Naive thymus-derived CD4-positive, alpha-beta T cell (primary cell): ENCODE measurements at regions of chr4 and their contacts with region 1.

Region 1: GRCh38 chr4:169612871-169613859 is 782 bp upstream of the NEK1 start:
- DNase-seq: peak; percentile 37 to 78 (median 73)
- ATAC-seq: peak; percentile 62
- H3K4me3 ChIP-seq: peak overlapping the region; percentile 98
- H3K4me3 Mint-ChIP-seq: peak overlapping the region; percentile 90 to 99 (median 98)
- H3K27ac ChIP-seq: peak overlapping the region; percentile 99
- H3K27ac Mint-ChIP-seq: peak overlapping the region; percentile 97 to 100 (median 100)
- H3K4me1 ChIP-seq: peaks cover 8 to 25% of the 10 kb centered on the region in 2 donors
- H3K4me1 Mint-ChIP-seq: peaks cover 12 to 73% (median 50%) of the 10 kb centered on the region in 7 donors
- H3K27me3 ChIP-seq: no peaks in the 10 kb centered on the region
- H3K27me3 Mint-ChIP-seq: no peaks in the 10 kb centered on the region

Region 2: DNA sequence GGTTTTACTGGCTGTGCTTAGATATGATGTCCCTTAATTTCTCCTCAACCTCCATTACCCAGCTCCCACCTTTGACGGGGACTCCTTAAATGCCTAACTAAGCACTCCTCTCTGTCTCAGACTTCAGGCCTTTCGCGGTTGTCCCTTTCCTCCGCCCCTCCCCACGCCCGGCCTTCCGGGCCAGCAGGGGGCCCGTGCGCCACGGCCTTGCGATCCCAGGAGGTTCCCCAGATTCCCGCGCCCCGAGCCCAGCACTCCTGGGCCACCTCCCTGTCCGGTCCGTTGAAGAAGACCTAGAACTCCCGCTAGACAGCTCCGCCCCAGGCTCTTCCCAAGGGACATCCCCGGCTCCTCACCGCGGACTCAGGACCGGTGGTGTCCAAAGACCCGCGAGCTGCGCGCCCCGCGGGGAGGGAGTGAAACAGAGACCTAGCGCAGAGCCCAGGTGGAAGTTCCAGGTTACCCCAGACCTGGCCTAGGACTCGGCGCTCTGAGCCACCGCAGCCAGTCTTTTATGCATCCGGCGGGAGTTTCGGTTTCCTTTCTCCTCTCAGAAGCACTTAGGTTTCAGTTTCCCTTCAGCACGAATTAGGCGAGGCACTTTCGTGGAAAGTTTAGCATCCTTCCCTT is 1294.8 kb before region 1 on chr4 and contains the start of gene DDX60:
- CTCF ChIA-PET with region 1: no interaction called
- POLR2A ChIA-PET with region 1: no interaction called
- intact Hi-C with region 1: loop called (anchors 1 to 5 kb)
- DNase-seq: peak; percentile 54 to 89 (median 85)
- ATAC-seq: peak; percentile 95
- H3K4me3 ChIP-seq: peak within 1 kb of the TSS; percentile 88
- H3K4me3 Mint-ChIP-seq: peak within 1 kb of the TSS; percentile 84 to 99 (median 96)
- H3K27ac ChIP-seq: peak within 1 kb of the TSS; percentile 95
- H3K27ac Mint-ChIP-seq: peak within 1 kb of the TSS; percentile 96 to 99 (median 99)
- H3K4me1 ChIP-seq: peaks cover 12 to 18% of the 10 kb centered on the region in 2 donors
- H3K4me1 Mint-ChIP-seq: peaks cover 28 to 69% (median 59%) of the 10 kb centered on the region in 7 donors
- H3K27me3 ChIP-seq: no peaks in the 10 kb centered on the region
- H3K27me3 Mint-ChIP-seq: no peaks in the 10 kb centered on the region
- total RNA-seq, gene DDX60: 15.8 to 121 (median 29.0) TPM

Region 3: DNA sequence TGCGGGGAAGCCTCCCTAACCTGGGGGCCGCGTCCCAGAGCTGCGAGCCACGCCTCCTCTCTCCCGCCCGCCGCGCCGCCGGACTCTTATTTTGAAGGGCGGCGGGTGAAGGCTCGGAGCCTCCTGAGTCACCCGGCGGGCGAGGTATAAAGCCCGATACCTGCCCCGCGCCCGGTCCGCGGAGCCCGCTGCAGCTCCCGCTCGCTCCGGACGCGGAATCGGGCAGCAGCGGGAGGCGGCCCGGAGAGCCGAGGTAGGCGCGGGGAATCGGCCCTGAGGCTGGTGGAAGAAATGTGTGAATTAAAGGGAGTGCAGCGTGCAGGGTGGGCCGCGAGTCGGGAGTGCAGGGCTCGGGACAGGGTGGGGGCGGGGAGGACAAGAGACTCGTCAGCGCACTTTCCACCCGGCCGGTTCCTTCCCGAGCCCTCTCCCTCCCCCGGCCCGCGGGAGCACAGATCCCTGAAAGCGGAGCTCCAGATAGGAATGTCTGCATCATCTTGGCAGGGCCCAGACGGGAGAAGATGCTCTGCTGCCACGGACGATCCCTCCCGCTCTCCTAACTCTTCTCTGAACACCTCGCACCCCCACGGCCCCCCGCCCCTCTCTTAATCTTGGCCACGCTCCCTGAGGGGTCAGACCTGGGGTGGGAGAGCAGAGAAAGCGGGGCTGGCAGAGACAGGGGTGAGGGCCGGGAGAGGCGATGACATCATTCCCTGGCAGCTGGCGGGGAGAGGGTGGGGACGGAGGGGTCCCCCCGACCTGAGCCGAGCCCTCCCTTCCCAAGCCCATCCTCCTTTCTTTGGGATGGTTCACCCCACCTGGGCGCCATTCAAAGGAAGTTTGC is 781.0 kb before region 1 on chr4:
- CTCF ChIA-PET with region 1: no interaction called
- POLR2A ChIA-PET with region 1: no interaction called
- intact Hi-C with region 1: loop called in 1 of 2 experiments (anchors 5 kb)
- DNase-seq: peak in 8 of 9 donors; percentile 31 to 77 (median 44)
- ATAC-seq: peak; percentile 85
- H3K4me3 ChIP-seq: peak overlapping the region; percentile 45
- H3K4me3 Mint-ChIP-seq: peak overlapping the region; percentile 63 to 91 (median 84)
- H3K27ac ChIP-seq: no peak overlapping the region
- H3K27ac Mint-ChIP-seq: peak overlapping the region in 1 of 9 donors; percentile 66
- H3K4me1 ChIP-seq: peaks cover 0 to 5% of the 10 kb centered on the region in 2 donors
- H3K4me1 Mint-ChIP-seq: peaks cover 0 to 21% (median 13%) of the 10 kb centered on the region in 7 donors
- H3K27me3 ChIP-seq: peaks cover 0 to 15% of the 10 kb centered on the region in 2 donors
- H3K27me3 Mint-ChIP-seq: peaks cover 46 to 68% (median 60%) of the 10 kb centered on the region in 5 donors

Region 4: DNA sequence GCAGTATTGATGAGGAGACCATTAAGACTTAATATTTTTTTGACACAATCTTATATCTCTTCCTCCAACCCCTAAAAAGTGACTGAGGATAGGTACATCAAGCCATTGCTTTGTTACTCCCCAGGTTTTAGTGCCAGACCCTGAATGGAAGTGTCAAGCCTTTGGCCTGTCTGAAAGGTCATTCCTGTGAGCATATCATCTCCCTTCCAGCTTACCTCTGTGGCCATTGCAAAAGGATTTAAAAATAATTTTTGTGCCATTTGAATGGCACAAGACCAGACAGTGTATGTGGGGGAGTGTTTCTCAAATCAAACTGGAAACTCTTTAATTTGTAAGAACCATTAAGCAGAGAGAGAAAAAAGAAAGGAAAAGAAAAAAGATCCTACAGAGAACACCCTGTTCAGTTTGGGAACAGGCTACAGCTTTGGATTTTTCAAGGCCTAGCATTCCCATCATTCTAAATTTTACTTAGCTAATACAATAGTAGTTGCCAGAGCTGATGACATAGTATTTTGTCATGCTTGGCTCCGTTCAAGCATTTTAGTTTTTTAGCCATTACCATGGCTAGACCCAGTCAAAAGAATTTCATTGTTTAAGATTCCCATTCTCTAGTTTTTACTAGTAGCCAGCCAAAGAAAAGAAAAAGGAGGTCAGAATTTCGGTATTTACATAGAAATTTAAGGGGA is 94.9 kb after region 1 on chr4:
- CTCF ChIA-PET with region 1: no interaction called
- POLR2A ChIA-PET with region 1: no interaction called
- intact Hi-C with region 1: loop called in 1 of 2 experiments (anchors 5 kb)
- DNase-seq: no peak
- ATAC-seq: no peak
- H3K4me3 ChIP-seq: no peak overlapping the region
- H3K4me3 Mint-ChIP-seq: no peak overlapping the region
- H3K27ac ChIP-seq: no peak overlapping the region
- H3K27ac Mint-ChIP-seq: peak overlapping the region in 3 of 9 donors; percentile 61 to 65 (median 64)
- H3K4me1 ChIP-seq: no peaks in the 10 kb centered on the region
- H3K4me1 Mint-ChIP-seq: peaks cover 0 to 6% (median 0%) of the 10 kb centered on the region in 7 donors
- H3K27me3 ChIP-seq: no peaks in the 10 kb centered on the region
- H3K27me3 Mint-ChIP-seq: no peaks in the 10 kb centered on the region

Region 5: DNA sequence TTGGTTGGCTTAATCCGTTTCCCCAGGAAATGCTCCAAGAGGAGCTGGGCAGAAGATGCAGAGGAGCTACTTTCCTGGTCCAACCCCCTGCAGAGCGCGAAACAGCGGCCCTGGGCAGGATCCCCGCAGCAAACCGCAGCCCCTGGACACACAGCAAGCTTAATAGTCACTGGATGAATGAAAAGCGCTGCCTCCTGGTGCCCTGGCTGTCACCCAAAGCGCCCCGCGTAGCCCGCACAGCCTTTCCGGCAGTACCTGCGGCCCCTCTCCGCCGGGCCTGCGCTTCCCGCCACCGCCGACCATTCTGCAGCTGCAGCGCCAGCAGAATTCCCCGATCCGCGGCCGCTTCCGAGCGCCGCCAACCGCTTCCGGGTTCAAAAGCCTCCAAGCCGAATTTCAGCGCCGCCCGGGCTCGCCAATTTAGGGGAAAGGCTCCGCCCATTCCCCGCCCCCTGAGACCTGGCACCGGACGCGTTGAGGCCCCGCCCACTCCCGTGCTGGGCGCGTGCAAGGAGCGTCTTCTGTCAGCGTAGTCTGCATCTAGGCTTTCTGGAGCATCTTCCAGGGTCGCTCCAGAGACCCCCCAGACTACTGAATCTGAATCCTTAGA is 144.5 kb after region 1 on chr4 and contains the start of gene HPF1:
- CTCF ChIA-PET with region 1: no interaction called
- POLR2A ChIA-PET with region 1: interaction called, 4 read pairs
- intact Hi-C with region 1: loop called (anchors 1 kb)
- DNase-seq: peak; percentile 84 to 93 (median 89)
- ATAC-seq: peak; percentile 98
- H3K4me3 ChIP-seq: peak within 1 kb of the TSS; percentile 83
- H3K4me3 Mint-ChIP-seq: peak within 1 kb of the TSS; percentile 82 to 92 (median 88)
- H3K27ac ChIP-seq: peak within 1 kb of the TSS; percentile 66
- H3K27ac Mint-ChIP-seq: peak within 1 kb of the TSS; percentile 52 to 81 (median 71)
- H3K4me1 ChIP-seq: peaks cover 0 to 7% of the 10 kb centered on the region in 2 donors
- H3K4me1 Mint-ChIP-seq: peaks cover 19 to 38% (median 30%) of the 10 kb centered on the region in 7 donors
- H3K27me3 ChIP-seq: no peaks in the 10 kb centered on the region
- H3K27me3 Mint-ChIP-seq: peaks cover 0 to 22% (median 0%) of the 10 kb centered on the region in 5 donors
- total RNA-seq, gene HPF1: 9.9 to 23.5 (median 13.8) TPM

Region 6: DNA sequence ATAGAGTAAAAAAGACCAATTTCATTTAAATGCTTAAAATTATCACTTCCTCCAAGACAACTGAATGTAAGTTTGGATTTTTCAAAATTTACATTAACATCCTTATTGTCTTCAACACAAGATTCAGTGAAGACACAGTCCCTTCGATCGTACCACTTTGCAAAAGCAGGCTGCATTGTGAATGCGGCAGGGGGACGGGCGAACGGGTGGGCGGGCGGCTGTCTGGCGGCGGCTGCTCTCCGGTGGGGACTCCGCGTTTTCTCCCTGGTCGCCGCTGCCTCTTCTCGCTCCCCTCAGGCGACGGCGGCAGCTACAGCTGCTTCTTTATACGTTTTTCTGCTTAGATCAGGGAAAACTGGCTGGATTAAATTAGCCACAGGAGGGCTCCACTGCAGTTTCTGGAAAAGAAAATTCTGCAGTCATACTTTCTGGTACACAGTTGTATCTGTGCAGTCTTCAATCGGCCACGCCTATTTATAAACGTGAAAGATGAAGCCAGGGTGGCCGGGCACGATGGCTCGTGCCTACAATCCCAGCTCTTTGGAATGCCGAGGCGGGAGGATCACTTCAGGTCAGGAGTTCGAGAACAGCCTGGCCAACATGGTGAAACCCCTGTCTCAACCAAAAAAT is 178.5 kb after region 1 on chr4:
- CTCF ChIA-PET with region 1: no interaction called
- POLR2A ChIA-PET with region 1: no interaction called
- intact Hi-C with region 1: loop called in 1 of 2 experiments (anchors 1 kb)
- DNase-seq: no peak
- ATAC-seq: peak; percentile 38
- H3K4me3 ChIP-seq: no peak overlapping the region
- H3K4me3 Mint-ChIP-seq: peak overlapping the region in 8 of 10 donors; percentile 29 to 73 (median 55)
- H3K27ac ChIP-seq: no peak overlapping the region
- H3K27ac Mint-ChIP-seq: no peak overlapping the region
- H3K4me1 ChIP-seq: no peaks in the 10 kb centered on the region
- H3K4me1 Mint-ChIP-seq: peaks cover 5 to 11% (median 9%) of the 10 kb centered on the region in 7 donors
- H3K27me3 ChIP-seq: peaks cover 0 to 16% of the 10 kb centered on the region in 2 donors
- H3K27me3 Mint-ChIP-seq: peaks cover 40 to 77% (median 65%) of the 10 kb centered on the region in 5 donors

Region 7: DNA sequence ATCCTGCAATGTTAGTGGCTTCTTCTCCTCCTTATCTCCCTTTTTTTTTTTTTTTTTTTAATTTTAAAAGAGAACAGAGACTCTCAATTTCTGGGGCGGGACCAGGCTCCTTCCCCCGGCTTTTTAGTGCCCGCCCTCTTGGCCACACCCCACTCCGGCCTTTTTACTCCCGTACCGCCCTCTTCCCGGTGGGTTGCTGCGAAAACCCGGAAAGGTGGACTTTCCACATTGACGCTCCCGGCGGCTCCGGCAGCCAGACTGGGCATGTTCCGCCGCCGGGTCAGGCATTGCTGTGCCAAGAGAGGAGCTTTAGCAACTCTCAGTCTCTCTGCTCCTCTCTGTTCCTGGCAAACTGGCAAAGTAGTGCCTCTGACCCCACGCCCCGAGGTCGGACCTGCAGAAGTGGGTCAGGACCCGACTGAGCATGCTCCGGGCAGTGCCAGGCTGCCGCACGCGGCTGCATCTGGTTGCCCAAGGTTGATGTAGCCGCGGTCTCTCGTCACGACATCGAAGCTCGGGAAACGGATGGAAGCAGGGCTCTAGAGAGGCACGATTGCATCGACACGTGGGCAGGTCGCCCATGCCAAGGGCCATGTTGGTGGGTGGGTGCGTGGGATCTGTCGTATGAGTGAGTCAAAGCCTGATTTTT is 414.1 kb after region 1 on chr4:
- CTCF ChIA-PET with region 1: interaction called, 3 read pairs
- POLR2A ChIA-PET with region 1: interaction called, 7 read pairs
- intact Hi-C with region 1: loop called (anchors 1 kb)
- DNase-seq: peak; percentile 76 to 92 (median 89)
- ATAC-seq: peak; percentile 83
- H3K4me3 ChIP-seq: peak overlapping the region; percentile 71
- H3K4me3 Mint-ChIP-seq: peak overlapping the region; percentile 86 to 96 (median 94)
- H3K27ac ChIP-seq: peak overlapping the region; percentile 59
- H3K27ac Mint-ChIP-seq: peak overlapping the region; percentile 65 to 89 (median 81)
- H3K4me1 ChIP-seq: peaks cover 0 to 7% of the 10 kb centered on the region in 2 donors
- H3K4me1 Mint-ChIP-seq: peaks cover 6 to 14% (median 11%) of the 10 kb centered on the region in 7 donors
- H3K27me3 ChIP-seq: no peaks in the 10 kb centered on the region
- H3K27me3 Mint-ChIP-seq: peaks cover 0 to 60% (median 8%) of the 10 kb centered on the region in 5 donors

Region 8: GRCh38 chr4:170202721-170203120 is 589.6 kb after region 1 on chr4:
- CTCF ChIA-PET with region 1: no interaction called
- POLR2A ChIA-PET with region 1: no interaction called
- intact Hi-C with region 1: no loop called
- DNase-seq: no peak
- ATAC-seq: no peak
- H3K4me3 ChIP-seq: no peak overlapping the region
- H3K4me3 Mint-ChIP-seq: no peak overlapping the region
- H3K27ac ChIP-seq: no peak overlapping the region
- H3K27ac Mint-ChIP-seq: no peak overlapping the region
- H3K4me1 ChIP-seq: no peaks in the 10 kb centered on the region
- H3K4me1 Mint-ChIP-seq: no peaks in the 10 kb centered on the region
- H3K27me3 ChIP-seq: no peaks in the 10 kb centered on the region
- H3K27me3 Mint-ChIP-seq: peaks cover 0 to 8% (median 0%) of the 10 kb centered on the region in 5 donors